Activated T-helper 2 cell treated with anti-CD3 and anti-CD28 coated beads, Interferon-gamma antibody, Interleukin-2, Interleukin-4, amounts not matched to agents 10 μg/mL and 5 μg/mL and 100 μg/mL, durations not matched to agents 14 hours and 24 hours and 36 hours (primary cell): ENCODE measurements at regions of chr7 and their contacts with region 1.

Region 1: GRCh38 chr7:5574770-5575269 is 151.2 kb upstream of the TNRC18 start:
- DNase-seq: no peak
- H3K4me3 Mint-ChIP-seq: no peak overlapping the region
- H3K27ac Mint-ChIP-seq: no peak overlapping the region
- H3K4me1 Mint-ChIP-seq: peaks cover 16% of the 10 kb centered on the region
- H3K27me3 Mint-ChIP-seq: peaks cover 27% of the 10 kb centered on the region

Region 2: GRCh38 chr7:5348134-5349004 is 226.5 kb before region 1 on chr7:
- intact Hi-C with region 1: no loop called
- DNase-seq: no peak
- H3K4me3 Mint-ChIP-seq: no peak overlapping the region
- H3K27ac Mint-ChIP-seq: no peak overlapping the region
- H3K4me1 Mint-ChIP-seq: no peaks in the 10 kb centered on the region
- H3K27me3 Mint-ChIP-seq: no peaks in the 10 kb centered on the region

Region 3: GRCh38 chr7:5607951-5608656 is 33.3 kb after region 1 on chr7:
- intact Hi-C with region 1: no loop called
- DNase-seq: no peak
- H3K4me3 Mint-ChIP-seq: no peak overlapping the region
- H3K27ac Mint-ChIP-seq: no peak overlapping the region
- H3K4me1 Mint-ChIP-seq: no peaks in the 10 kb centered on the region
- H3K27me3 Mint-ChIP-seq: no peaks in the 10 kb centered on the region

Region 4: DNA sequence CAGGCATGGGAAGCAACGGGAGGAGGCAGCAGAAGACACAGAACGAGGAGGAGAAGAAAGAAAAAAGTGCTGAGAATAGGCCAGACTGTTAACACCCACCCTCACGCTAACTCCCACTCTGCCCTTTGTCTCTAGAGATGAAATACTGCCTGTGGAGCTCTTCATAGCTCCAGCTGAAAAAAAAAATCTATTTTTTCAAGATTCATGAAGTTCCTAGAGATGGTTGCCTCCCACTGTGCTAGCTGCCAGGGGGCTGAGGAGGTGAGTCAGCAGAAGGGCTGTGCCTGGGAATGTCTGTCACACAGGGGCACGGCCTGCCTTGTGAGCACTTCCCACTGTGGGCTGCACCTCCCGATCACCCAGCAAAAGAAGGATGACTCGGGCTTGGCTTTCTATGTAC is 62.1 kb after region 1 on chr7:
- intact Hi-C with region 1: loop called (anchors 5 kb)
- DNase-seq: no peak
- H3K4me3 Mint-ChIP-seq: no peak overlapping the region
- H3K27ac Mint-ChIP-seq: no peak overlapping the region
- H3K4me1 Mint-ChIP-seq: peaks cover 8% of the 10 kb centered on the region
- H3K27me3 Mint-ChIP-seq: no peaks in the 10 kb centered on the region